Activated CD8-positive, alpha-beta memory T cell treated with anti-CD3 and anti-CD28 coated beads, Interleukin-2, amount 10 ng/mL, durations not matched to agents 7 days and 5 days (primary cell): ENCODE measurements at regions of chr2 and their contacts with region 1.

Region 1: GRCh38 chr2:130797493-130798435 is 39.0 kb upstream of the ARHGEF4 start:
- DNase-seq: peak; percentile 93
- ATAC-seq: peak; percentile 93
- H3K4me3 Mint-ChIP-seq: peak overlapping the region; percentile 66
- H3K27ac Mint-ChIP-seq: peak overlapping the region; percentile 64
- H3K4me1 Mint-ChIP-seq: peaks cover 17% of the 10 kb centered on the region
- H3K27me3 Mint-ChIP-seq: peaks cover 5% of the 10 kb centered on the region

Region 2: GRCh38 chr2:130727286-130728018 is 70.3 kb before region 1 on chr2:
- CTCF ChIA-PET with region 1: interaction called, 27 read pairs
- DNase-seq: peak; percentile 94
- ATAC-seq: peak; percentile 87
- H3K4me3 Mint-ChIP-seq: peak overlapping the region; percentile 68
- H3K27ac Mint-ChIP-seq: peak overlapping the region; percentile 78
- H3K4me1 Mint-ChIP-seq: peaks cover 26% of the 10 kb centered on the region
- H3K27me3 Mint-ChIP-seq: peaks cover 22% of the 10 kb centered on the region

Region 3: GRCh38 chr2:130813722-130814121 is 16.0 kb after region 1 on chr2:
- CTCF ChIA-PET with region 1: interaction called, 14 read pairs
- DNase-seq: no peak
- ATAC-seq: no peak
- H3K4me3 Mint-ChIP-seq: no peak overlapping the region
- H3K27ac Mint-ChIP-seq: no peak overlapping the region
- H3K4me1 Mint-ChIP-seq: no peaks in the 10 kb centered on the region
- H3K27me3 Mint-ChIP-seq: peaks cover 29% of the 10 kb centered on the region

Region 4: GRCh38 chr2:130824492-130825061 is 26.8 kb after region 1 on chr2:
- CTCF ChIA-PET with region 1: interaction called, 24 read pairs
- DNase-seq: peak; percentile 84
- ATAC-seq: peak; percentile 97
- H3K4me3 Mint-ChIP-seq: no peak overlapping the region
- H3K27ac Mint-ChIP-seq: peak overlapping the region; percentile 83
- H3K4me1 Mint-ChIP-seq: peaks cover 19% of the 10 kb centered on the region
- H3K27me3 Mint-ChIP-seq: peaks cover 17% of the 10 kb centered on the region

Region 5: DNA sequence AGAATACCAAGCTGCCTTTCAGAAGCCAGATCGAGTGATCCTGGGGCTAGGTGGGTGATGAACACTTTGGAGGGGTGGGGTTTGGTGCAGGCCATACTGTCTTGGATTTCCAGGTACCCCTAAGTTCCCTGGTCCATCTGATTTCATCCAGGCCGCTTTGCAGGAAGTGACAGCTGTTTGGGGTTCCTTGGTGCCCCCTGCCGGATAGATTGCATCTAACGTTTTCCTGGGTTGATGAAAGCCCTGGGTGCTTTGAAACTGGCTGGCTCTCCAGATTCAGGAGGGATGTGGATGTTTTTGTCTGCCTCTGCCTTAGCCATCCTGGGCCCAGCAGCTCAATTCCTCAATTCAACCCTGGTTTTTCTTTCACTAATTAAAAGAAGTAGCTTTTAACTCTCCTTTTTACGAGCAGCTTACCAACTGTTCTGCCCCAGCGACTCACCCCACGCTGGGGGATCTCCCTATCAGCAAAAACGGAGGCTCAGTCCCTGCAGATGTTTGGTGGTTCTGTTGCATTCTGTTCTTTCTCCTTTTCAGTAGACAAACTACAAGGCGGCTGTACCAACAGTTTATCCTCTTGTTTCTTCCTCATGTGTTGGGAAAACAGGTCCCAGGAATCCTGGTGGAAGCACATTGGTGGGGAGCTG is 76.1 kb after region 1 on chr2:
- CTCF ChIA-PET with region 1: interaction called, 271 read pairs
- DNase-seq: peak; percentile 82
- ATAC-seq: peak; percentile 83
- H3K4me3 Mint-ChIP-seq: no peak overlapping the region
- H3K27ac Mint-ChIP-seq: no peak overlapping the region
- H3K4me1 Mint-ChIP-seq: no peaks in the 10 kb centered on the region
- H3K27me3 Mint-ChIP-seq: peaks cover 16% of the 10 kb centered on the region

Region 6: GRCh38 chr2:130920415-130921163 is 122.8 kb after region 1 on chr2:
- CTCF ChIA-PET with region 1: interaction called, 11 read pairs
- DNase-seq: peak; percentile 59
- ATAC-seq: no peak
- H3K4me3 Mint-ChIP-seq: no peak overlapping the region
- H3K27ac Mint-ChIP-seq: no peak overlapping the region
- H3K4me1 Mint-ChIP-seq: no peaks in the 10 kb centered on the region
- H3K27me3 Mint-ChIP-seq: peaks cover 23% of the 10 kb centered on the region